ENCODE measurements at regions of chr1 and their contacts with region 1.

Region 1: GRCh38 chr1:235843461-235843961 is 23.2 kb downstream of the LYST start:
- DNase-seq: no peak
- H3K4me3 Mint-ChIP-seq: no peak overlapping the region
- H3K27ac Mint-ChIP-seq: no peak overlapping the region
- H3K4me1 Mint-ChIP-seq: peaks cover 48% of the 10 kb centered on the region
- H3K27me3 Mint-ChIP-seq: no peaks in the 10 kb centered on the region

Region 2: DNA sequence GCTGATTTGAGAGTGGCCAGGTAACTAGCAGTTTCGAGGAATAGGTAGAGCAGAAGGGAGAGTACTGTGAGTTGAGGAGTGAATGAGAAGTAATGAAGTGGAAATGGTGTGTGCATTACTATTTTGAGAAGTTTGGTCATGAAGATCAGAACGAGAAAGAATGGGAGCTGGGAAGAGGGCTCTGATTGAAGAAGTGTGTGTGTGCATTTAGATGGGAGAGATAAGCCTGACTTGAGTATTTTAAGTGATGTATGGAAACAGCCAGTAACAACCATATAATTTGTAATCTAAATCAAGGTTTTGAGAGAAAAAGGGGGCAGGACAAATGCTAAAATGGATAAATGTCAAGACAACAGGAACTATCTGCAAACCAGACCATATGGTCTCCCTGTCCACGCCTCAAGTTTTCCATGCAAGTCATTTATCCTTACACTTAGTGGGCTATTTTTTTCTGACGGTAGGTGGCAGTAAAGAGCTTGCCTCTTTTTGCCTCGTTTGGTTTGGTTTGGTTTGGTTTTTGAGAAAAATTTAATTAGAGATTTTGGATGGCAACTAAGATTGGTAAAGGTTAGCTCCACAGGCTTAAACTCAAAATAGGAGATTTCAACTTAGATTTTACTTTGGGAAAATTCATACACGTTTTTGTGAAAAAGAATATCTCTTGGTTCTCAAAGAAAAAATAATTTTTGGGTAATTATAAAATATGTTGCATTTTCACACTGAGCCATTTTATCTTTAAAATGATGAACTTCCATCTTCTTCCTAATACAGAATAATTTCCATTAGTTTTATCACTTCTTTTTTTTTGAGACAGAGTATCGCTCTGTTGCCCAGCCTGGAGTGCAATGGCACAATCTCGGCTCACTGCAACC is 329.8 kb before region 1 on chr1:
- CTCF ChIA-PET with region 1: interaction called, 7 read pairs
- intact Hi-C with region 1: loop called (anchors 1 kb)
- DNase-seq: peak; percentile 54
- H3K4me3 Mint-ChIP-seq: no peak overlapping the region
- H3K27ac Mint-ChIP-seq: no peak overlapping the region
- H3K4me1 Mint-ChIP-seq: no peaks in the 10 kb centered on the region
- H3K27me3 Mint-ChIP-seq: no peaks in the 10 kb centered on the region

Region 3: DNA sequence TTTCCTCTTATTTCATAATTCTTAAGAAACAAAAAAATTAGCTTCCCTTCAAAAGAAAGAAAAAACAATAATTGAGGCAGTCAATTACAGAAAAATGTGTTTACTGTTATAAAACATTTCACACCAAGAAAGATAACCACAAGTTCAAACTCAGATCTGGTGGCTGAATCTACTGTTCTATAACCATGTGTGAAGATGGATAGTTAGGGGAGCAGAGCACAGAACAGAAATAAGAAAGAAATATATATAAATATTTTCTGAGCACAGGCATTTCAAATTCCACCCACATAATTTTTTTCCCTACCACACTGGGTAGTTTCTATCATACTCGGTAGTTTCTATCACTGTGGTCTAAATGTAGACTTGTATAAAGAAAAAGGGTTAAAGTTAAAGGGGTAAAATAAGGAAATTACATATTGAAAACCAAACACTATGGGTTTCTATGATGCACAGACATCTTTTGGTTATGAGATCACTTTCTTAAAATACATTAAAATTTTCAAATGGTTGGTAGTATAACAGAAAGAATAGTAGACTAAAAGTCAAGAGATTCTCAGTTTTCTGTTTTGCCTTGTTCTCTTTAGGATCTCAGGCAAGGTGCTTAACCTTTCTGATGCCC is 12.4 kb after region 1 on chr1:
- CTCF ChIA-PET with region 1: interaction called, 13 read pairs
- intact Hi-C with region 1: loop called (anchors 1 kb)
- DNase-seq: no peak
- H3K4me3 Mint-ChIP-seq: no peak overlapping the region
- H3K27ac Mint-ChIP-seq: no peak overlapping the region
- H3K4me1 Mint-ChIP-seq: peaks cover 54% of the 10 kb centered on the region
- H3K27me3 Mint-ChIP-seq: no peaks in the 10 kb centered on the region

Region 4: DNA sequence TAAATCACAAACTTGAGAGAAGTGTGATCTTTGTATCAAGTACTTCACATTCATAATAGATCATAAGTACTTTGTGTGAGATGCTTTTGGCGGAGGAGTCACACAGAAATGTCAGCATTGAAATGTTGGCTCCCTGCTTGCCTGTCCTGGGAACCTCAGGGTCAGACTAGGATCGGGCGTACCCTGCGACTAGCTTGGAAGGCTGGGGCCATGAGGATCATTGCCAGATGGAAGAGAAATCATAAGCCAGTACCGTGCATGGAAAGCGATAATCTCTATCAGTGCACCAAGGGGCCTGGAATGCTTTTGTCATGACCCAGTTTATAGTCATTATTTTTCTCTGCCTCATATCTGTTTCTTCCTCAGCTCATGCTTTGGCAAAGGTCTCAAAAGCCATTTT is 987.0 kb after region 1 on chr1:
- CTCF ChIA-PET with region 1: no interaction called
- intact Hi-C with region 1: no loop called
- DNase-seq: no peak
- H3K4me3 Mint-ChIP-seq: no peak overlapping the region
- H3K27ac Mint-ChIP-seq: no peak overlapping the region
- H3K4me1 Mint-ChIP-seq: peaks cover 5% of the 10 kb centered on the region
- H3K27me3 Mint-ChIP-seq: no peaks in the 10 kb centered on the region

Measured in activated naive CD4-positive, alpha-beta T cell treated with anti-CD3 and anti-CD28 coated beads for 36 hours (primary cell).